Activated B cell treated with CpG ODN at 0.5 μM for 24 hours (primary cell): ENCODE measurements at regions of chr3 and their contacts with region 1.

Region 1: DNA sequence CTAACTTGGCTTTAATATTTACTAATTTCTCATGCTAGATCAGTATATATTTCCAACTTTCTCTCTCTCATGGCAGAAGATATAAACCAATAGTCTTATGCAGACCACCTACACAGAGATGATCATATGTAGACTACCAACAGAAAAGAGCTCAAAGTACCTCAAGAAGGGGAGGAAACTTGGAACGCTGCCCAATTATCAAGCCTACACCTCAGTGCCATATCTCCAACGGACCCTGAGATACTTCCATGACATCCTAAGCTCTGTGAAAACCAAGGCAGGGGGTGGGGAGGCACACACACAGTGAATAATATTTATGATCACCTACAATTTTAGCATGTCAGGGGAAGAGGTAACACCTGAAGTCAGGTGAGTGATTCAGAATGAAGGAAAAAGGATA is 100.6 kb downstream of the STAG1 start:
- DNase-seq: no peak
- ATAC-seq: no peak
- H3K4me3 Mint-ChIP-seq: no peak overlapping the region
- H3K27ac Mint-ChIP-seq: no peak overlapping the region
- H3K4me1 Mint-ChIP-seq: peaks cover 27% of the 10 kb centered on the region
- H3K27me3 Mint-ChIP-seq: no peaks in the 10 kb centered on the region
- CTCF ChIP-seq: no peak

Region 2: GRCh38 chr3:136634821-136635220 is 16.8 kb before region 1 on chr3:
- CTCF ChIA-PET with region 1: no interaction called
- POLR2A ChIA-PET with region 1: no interaction called
- intact Hi-C with region 1: loop called (anchors 2 kb)
- DNase-seq: no peak
- ATAC-seq: no peak
- H3K4me3 Mint-ChIP-seq: no peak overlapping the region
- H3K27ac Mint-ChIP-seq: no peak overlapping the region
- H3K4me1 Mint-ChIP-seq: peaks cover 50% of the 10 kb centered on the region
- H3K27me3 Mint-ChIP-seq: no peaks in the 10 kb centered on the region
- CTCF ChIP-seq: no peak

Region 3: DNA sequence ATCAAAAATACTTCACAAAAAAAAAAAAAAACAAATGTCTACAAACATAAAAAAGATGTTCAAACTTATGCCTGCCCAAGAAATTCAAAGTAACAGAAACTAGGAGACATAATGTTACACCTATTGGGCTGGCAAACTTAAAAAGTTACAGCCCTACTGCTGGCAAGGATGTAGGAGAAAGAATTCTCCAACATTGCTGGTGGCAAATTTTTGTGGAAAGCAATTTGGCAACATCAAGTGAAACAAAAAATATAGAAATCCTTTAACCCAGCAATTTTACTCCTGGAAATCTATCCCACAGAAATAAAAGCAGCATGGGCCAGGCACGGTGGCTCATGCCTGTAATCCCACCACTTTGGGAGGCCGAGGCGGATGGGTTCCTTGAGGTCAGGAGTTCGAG is 27.4 kb after region 1 on chr3:
- CTCF ChIA-PET with region 1: no interaction called
- POLR2A ChIA-PET with region 1: no interaction called
- intact Hi-C with region 1: no loop called
- DNase-seq: no peak
- ATAC-seq: no peak
- H3K4me3 Mint-ChIP-seq: no peak overlapping the region
- H3K27ac Mint-ChIP-seq: no peak overlapping the region
- H3K4me1 Mint-ChIP-seq: peaks cover 47% of the 10 kb centered on the region
- H3K27me3 Mint-ChIP-seq: no peaks in the 10 kb centered on the region
- CTCF ChIP-seq: no peak